ENCODE measurements at regions of chr4 and their contacts with region 1.

Region 1: DNA sequence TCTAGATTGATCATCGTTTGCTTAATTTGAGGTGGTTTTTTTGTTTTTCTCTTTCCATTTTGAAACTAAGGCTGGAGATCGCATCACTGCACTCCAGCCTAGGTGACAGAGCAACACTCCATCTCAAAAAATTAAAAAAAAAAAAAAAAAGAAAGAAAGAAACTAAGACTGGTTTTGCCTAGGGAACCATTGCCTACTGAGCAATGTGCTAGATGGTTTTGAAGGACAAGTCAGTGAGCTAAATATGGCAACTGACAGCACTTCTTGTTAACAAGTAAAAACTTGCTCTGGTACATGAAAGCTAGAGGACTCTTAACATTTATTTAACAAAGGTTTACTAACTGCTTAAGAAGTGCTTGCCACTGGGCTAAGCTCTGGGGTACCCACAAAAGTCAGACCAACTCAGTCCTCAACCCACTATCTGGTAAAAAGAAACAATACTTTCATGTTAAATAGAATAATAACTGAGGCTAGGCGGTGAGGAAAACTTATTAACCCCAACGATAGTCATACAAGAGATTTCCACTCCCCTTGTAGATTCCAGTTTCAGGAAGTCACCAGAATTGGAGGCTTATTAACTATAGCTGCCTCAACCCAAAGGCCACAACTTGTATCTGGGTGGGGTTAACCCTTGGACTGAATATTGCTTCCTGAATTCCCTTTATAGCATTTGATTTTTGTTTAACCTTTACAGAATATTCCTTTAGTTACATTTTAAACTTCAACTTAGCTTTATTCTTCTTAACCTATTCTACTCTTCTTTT is 111.6 kb downstream of the FRYL start:
- DNase-seq: no peak
- H3K4me3 ChIP-seq: no peak overlapping the region
- H3K27ac ChIP-seq: no peak overlapping the region
- H3K4me1 ChIP-seq: no peaks in the 10 kb centered on the region
- H3K27me3 ChIP-seq: no peaks in the 10 kb centered on the region
- CTCF ChIP-seq: no peak

Region 2: GRCh38 chr4:48642421-48643374 is 25.7 kb before region 1 on chr4:
- CTCF ChIA-PET with region 1: no interaction called
- POLR2A ChIA-PET with region 1: interaction called, 13 read pairs
- intact Hi-C with region 1: no loop called
- DNase-seq: no peak
- H3K4me3 ChIP-seq: no peak overlapping the region
- H3K27ac ChIP-seq: no peak overlapping the region
- H3K4me1 ChIP-seq: peaks cover 37% of the 10 kb centered on the region
- H3K27me3 ChIP-seq: no peaks in the 10 kb centered on the region
- CTCF ChIP-seq: no peak

Measured in A673 (cell line).